ENCODE measurements at regions of chr6 and their contacts with region 1.

Region 1: GRCh38 chr6:149028767-149029405 is 282.1 kb downstream of the UST start:
- DNase-seq: peak; percentile 50 to 73 (median 68)
- H3K4me3 ChIP-seq: no peak overlapping the region
- H3K4me3 Mint-ChIP-seq: peak overlapping the region in 2 of 7 donors; percentile 26 to 68
- H3K27ac ChIP-seq: no peak overlapping the region
- H3K27ac Mint-ChIP-seq: peak overlapping the region in 1 of 8 donors; percentile 88
- H3K4me1 ChIP-seq: no peaks in the 10 kb centered on the region
- H3K4me1 Mint-ChIP-seq: peaks cover 27 to 55% (median 53%) of the 10 kb centered on the region in 3 donors
- H3K27me3 ChIP-seq: no peaks in the 10 kb centered on the region
- H3K27me3 Mint-ChIP-seq: no peaks in the 10 kb centered on the region

Region 2: GRCh38 chr6:149043476-149044130 is 14.7 kb after region 1 on chr6:
- CTCF ChIA-PET with region 1: interaction called, 32 read pairs
- POLR2A ChIA-PET with region 1: interaction called, 4 read pairs
- DNase-seq: no peak
- H3K4me3 ChIP-seq: no peak overlapping the region
- H3K4me3 Mint-ChIP-seq: no peak overlapping the region
- H3K27ac ChIP-seq: no peak overlapping the region
- H3K27ac Mint-ChIP-seq: no peak overlapping the region
- H3K4me1 ChIP-seq: peaks cover 22% of the 10 kb centered on the region
- H3K4me1 Mint-ChIP-seq: peaks cover 30 to 53% (median 39%) of the 10 kb centered on the region in 3 donors
- H3K27me3 ChIP-seq: no peaks in the 10 kb centered on the region
- H3K27me3 Mint-ChIP-seq: no peaks in the 10 kb centered on the region

Region 3: GRCh38 chr6:149082286-149082707 is 53.4 kb after region 1 on chr6:
- CTCF ChIA-PET with region 1: interaction called, 14 read pairs
- POLR2A ChIA-PET with region 1: no interaction called
- DNase-seq: peak; percentile 63 to 87 (median 70)
- H3K4me3 ChIP-seq: no peak overlapping the region
- H3K4me3 Mint-ChIP-seq: peak overlapping the region in 1 of 7 donors; percentile 7
- H3K27ac ChIP-seq: no peak overlapping the region
- H3K27ac Mint-ChIP-seq: peak overlapping the region in 2 of 8 donors; percentile 7 to 12
- H3K4me1 ChIP-seq: peaks cover 20% of the 10 kb centered on the region
- H3K4me1 Mint-ChIP-seq: peaks cover 23 to 51% (median 37%) of the 10 kb centered on the region in 3 donors
- H3K27me3 ChIP-seq: peaks cover under 1% of the 10 kb centered on the region
- H3K27me3 Mint-ChIP-seq: no peaks in the 10 kb centered on the region

Region 4: DNA sequence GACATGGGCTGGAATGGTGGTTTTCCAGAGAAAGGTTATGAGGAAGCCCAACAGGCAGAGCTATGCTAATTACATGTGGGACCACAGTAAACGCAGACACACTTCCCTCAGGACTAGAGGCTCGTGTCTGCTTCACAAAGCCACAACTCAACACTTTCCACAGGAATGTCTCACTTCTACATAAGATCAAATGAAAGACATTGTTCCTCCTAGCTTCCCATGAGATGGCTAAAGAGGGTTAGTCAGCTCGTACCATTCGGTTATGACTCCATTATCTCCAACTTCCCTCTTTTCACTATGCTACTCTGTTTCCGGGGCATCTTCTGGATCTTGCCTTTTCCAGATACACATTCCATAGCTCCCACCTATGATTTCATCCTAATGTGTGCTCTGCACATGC is 485.0 kb after region 1 on chr6:
- CTCF ChIA-PET with region 1: interaction called, 16 read pairs
- POLR2A ChIA-PET with region 1: no interaction called
- DNase-seq: no peak
- H3K4me3 ChIP-seq: no peak overlapping the region
- H3K4me3 Mint-ChIP-seq: no peak overlapping the region
- H3K27ac ChIP-seq: no peak overlapping the region
- H3K27ac Mint-ChIP-seq: peak overlapping the region in 2 of 8 donors; percentile 33 to 50
- H3K4me1 ChIP-seq: peaks cover 12% of the 10 kb centered on the region
- H3K4me1 Mint-ChIP-seq: peaks cover 20 to 47% (median 35%) of the 10 kb centered on the region in 3 donors
- H3K27me3 ChIP-seq: no peaks in the 10 kb centered on the region
- H3K27me3 Mint-ChIP-seq: no peaks in the 10 kb centered on the region

Measured in CD8-positive, alpha-beta memory T cell (primary cell).